ENCODE measurements at regions of chr12 and their contacts with region 1.

Region 1: DNA sequence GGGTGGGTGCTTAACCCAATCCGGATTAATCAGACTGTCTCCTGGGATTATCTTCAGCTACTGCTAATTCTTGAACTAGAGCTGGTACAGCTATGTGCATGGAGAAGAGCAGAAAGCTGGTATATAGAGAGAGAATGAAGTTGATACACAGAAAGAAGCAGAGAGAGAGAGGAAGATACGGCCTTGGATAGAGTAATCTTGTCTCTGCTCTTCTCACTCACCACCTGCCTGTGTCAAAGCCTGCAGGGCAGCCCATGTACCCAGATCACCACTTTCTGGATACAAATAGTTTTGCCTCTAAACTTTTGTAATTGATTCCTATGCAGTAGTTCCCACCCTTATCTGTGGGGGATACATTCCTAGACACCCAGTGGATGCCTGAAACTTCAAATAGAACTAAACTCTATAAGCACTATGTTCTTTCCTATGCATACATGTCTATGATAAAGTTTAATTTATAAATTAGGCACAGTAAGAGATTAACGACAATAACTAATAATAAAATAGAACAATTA is 45.4 kb downstream of the YEATS4 start:
- DNase-seq: no peak
- H3K4me3 ChIP-seq: no peak overlapping the region
- CTCF ChIP-seq: no peak

Region 2: DNA sequence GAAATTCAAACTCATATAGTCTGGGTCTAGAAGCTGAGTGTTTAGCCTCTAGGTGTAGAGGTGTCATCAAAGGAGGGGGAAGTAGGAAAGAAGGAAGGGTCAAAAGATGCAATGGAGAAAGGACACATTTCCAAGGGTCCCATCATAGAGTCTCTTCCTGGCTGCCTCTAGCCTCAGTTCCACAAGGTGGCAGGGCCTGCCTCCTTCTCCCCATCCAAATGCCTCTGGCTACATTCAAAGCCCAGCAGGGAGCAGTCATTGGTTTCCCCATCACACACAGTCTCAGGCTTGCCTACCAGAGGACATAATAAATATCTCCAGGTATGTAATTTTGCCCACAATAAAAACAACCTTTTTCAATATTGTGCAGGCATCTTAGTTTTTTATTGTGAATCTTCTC is 178.3 kb after region 1 on chr12:
- in situ Hi-C with region 1: loop called (anchors 5 kb)
- DNase-seq: no peak
- H3K4me3 ChIP-seq: no peak overlapping the region
- CTCF ChIP-seq: no peak

Measured in astrocyte of the cerebellum (primary cell).